Activated CD4-positive, alpha-beta memory T cell treated with anti-CD3 and anti-CD28 coated beads, Interleukin-2, amount 10 ng/mL, durations not matched to agents 7 days and 5 days (primary cell): ENCODE measurements at regions of chrX and their contacts with region 1.

Region 1: GRCh38 chrX:53683556-53684414 is 2.7 kb downstream of the HUWE1 start:
- DNase-seq: peak; percentile 93
- H3K4me3 Mint-ChIP-seq: peak overlapping the region; percentile 90
- H3K27ac Mint-ChIP-seq: peak overlapping the region; percentile 95
- H3K4me1 Mint-ChIP-seq: peaks cover 40% of the 10 kb centered on the region
- H3K27me3 Mint-ChIP-seq: no peaks in the 10 kb centered on the region

Region 2: GRCh38 chrX:53422086-53422860 is 261.5 kb before region 1 on chrX and contains the start of gene SMC1A:
- CTCF ChIA-PET with region 1: no interaction called
- POLR2A ChIA-PET with region 1: interaction called, 20 read pairs
- DNase-seq: peak; percentile 95
- H3K4me3 Mint-ChIP-seq: peak within 1 kb of the TSS; percentile 93
- H3K27ac Mint-ChIP-seq: peak within 1 kb of the TSS; percentile 93
- H3K4me1 Mint-ChIP-seq: peaks cover 34% of the 10 kb centered on the region
- H3K27me3 Mint-ChIP-seq: no peaks in the 10 kb centered on the region
- total RNA-seq, gene SMC1A: 130 to 132 TPM

Region 3: GRCh38 chrX:53587795-53588420 is 95.9 kb before region 1 on chrX:
- CTCF ChIA-PET with region 1: no interaction called
- POLR2A ChIA-PET with region 1: no interaction called
- DNase-seq: no peak
- H3K4me3 Mint-ChIP-seq: no peak overlapping the region
- H3K27ac Mint-ChIP-seq: peak overlapping the region; percentile 35
- H3K4me1 Mint-ChIP-seq: peaks cover 24% of the 10 kb centered on the region
- H3K27me3 Mint-ChIP-seq: no peaks in the 10 kb centered on the region

Region 4: DNA sequence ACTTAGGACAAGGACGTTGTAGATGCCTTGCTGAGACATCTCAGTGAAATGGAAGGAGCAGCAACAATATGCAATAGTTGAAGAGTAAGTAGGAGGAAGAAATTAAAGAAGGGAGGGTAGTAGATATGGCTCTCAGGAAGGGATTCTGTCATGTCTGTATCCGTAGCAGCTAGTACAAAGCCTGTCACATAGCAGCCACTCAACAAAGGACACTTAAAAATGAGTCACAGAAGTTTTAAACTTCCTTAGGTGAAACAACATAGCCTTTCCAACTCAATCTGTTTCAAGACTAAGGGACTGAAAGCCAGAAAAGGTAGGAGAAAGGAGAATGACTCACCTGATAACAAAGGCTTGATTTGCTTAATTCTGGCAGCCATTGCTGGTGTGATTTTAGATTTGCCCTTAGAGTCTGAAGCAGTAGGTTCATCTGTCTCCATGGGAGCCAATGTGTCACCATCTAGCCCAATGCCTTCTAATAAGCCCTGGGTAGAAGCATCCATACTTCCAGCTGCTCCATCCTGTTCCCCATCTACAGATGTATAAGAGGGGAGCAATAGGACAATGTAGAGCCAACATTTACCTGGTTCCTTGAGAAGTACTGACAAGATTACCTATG is 83.9 kb before region 1 on chrX:
- CTCF ChIA-PET with region 1: no interaction called
- POLR2A ChIA-PET with region 1: no interaction called
- DNase-seq: no peak
- H3K4me3 Mint-ChIP-seq: no peak overlapping the region
- H3K27ac Mint-ChIP-seq: no peak overlapping the region
- H3K4me1 Mint-ChIP-seq: peaks cover 10% of the 10 kb centered on the region
- H3K27me3 Mint-ChIP-seq: no peaks in the 10 kb centered on the region

Region 5: GRCh38 chrX:53694642-53695041 is 10.9 kb after region 1 on chrX:
- CTCF ChIA-PET with region 1: interaction called, 5 read pairs
- POLR2A ChIA-PET with region 1: interaction called, 18 read pairs
- DNase-seq: no peak
- H3K4me3 Mint-ChIP-seq: no peak overlapping the region
- H3K27ac Mint-ChIP-seq: no peak overlapping the region
- H3K4me1 Mint-ChIP-seq: peaks cover 26% of the 10 kb centered on the region
- H3K27me3 Mint-ChIP-seq: no peaks in the 10 kb centered on the region

Region 6: DNA sequence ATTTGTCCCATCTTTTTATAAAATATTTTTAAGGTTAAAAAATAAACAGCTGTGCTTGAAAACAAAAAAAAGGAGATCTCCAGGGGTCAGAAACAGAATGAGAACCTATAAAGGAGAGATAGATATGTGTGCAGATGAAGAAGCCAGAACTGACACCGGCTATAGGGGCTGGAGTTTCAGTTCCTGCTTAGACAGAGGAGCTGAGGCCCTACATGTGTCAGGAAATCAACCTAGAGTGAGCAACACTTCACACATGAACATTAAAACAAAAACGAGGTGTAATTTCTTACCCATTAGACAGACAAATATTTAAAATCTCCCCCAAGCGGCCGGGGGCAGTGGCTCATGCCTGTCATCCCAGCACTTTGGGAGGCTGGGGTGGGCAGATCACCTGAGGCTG is 20.5 kb after region 1 on chrX:
- CTCF ChIA-PET with region 1: interaction called, 3 read pairs
- POLR2A ChIA-PET with region 1: interaction called, 19 read pairs
- DNase-seq: no peak
- H3K4me3 Mint-ChIP-seq: no peak overlapping the region
- H3K27ac Mint-ChIP-seq: no peak overlapping the region
- H3K4me1 Mint-ChIP-seq: no peaks in the 10 kb centered on the region
- H3K27me3 Mint-ChIP-seq: no peaks in the 10 kb centered on the region

Region 7: GRCh38 chrX:53714580-53715345 is 31.0 kb after region 1 on chrX:
- CTCF ChIA-PET with region 1: interaction called, 10 read pairs
- POLR2A ChIA-PET with region 1: interaction called, 398 read pairs
- DNase-seq: peak; percentile 75
- H3K4me3 Mint-ChIP-seq: peak overlapping the region; percentile 85
- H3K27ac Mint-ChIP-seq: peak overlapping the region; percentile 100
- H3K4me1 Mint-ChIP-seq: peaks cover 60% of the 10 kb centered on the region
- H3K27me3 Mint-ChIP-seq: no peaks in the 10 kb centered on the region

Region 8: DNA sequence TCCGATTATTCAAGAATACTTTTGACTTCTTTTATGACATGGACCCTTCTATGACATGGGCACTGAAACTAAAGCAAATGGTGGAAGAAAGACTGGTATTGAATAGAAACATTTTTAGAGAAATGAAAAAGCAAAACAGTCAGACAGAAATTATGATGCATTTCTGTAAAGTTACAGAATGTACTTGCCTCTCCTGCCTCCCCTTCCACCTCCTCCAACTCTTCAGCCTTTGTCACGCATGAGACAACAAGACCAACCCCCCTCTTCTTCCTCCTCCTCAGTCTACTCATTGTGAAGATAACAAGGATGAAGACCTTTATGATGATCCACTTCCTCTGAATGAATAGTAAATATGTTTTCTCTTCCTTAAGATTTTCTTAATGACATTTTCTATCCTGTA is 49.0 kb after region 1 on chrX:
- CTCF ChIA-PET with region 1: interaction called, 3 read pairs
- POLR2A ChIA-PET with region 1: interaction called, 46 read pairs
- DNase-seq: no peak
- H3K4me3 Mint-ChIP-seq: peak overlapping the region; percentile 57
- H3K27ac Mint-ChIP-seq: peak overlapping the region; percentile 90
- H3K4me1 Mint-ChIP-seq: peaks cover 62% of the 10 kb centered on the region
- H3K27me3 Mint-ChIP-seq: no peaks in the 10 kb centered on the region

Region 9: GRCh38 chrX:53864591-53864990 is 180.8 kb after region 1 on chrX:
- CTCF ChIA-PET with region 1: no interaction called
- POLR2A ChIA-PET with region 1: no interaction called
- DNase-seq: no peak
- H3K4me3 Mint-ChIP-seq: no peak overlapping the region
- H3K27ac Mint-ChIP-seq: no peak overlapping the region
- H3K4me1 Mint-ChIP-seq: no peaks in the 10 kb centered on the region
- H3K27me3 Mint-ChIP-seq: no peaks in the 10 kb centered on the region

Region 10: DNA sequence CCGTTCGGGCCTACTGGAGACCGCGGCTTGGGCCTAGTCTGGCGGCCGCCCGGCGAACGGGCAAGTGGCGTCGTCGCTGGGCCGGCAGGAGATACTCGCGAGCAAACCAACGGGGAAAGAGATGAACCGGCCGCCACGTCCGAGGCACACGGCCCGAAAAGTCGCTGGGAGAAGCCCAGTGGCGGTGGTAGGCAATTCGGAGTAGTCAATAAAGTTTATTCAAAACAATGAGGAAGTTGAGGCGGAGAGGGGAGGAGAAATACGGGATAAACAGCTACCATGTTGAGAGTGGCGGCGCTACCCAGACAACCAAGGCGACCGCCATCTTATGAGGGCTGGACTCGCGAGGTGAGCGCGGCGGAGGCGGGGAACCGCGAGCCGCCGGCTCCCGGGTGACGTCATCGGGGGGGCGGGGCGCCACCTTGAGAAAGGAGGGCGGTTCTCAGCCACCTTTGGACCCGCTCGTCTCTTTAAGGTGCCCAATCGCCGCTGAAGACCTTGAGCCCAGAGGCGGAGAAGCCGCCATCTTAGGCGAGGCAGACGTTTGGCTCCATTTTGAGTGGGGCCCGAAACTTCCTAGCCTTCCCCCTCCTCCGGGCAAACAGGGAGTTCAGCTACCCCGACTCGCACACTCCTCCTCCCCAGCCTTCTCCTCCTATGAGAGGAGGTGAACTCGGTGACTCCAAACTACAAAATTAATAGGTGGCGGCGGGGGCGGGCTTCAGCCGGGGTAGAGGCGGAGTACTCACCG is 360.5 kb after region 1 on chrX and contains the start of gene PHF8:
- CTCF ChIA-PET with region 1: interaction called, 4 read pairs
- POLR2A ChIA-PET with region 1: interaction called, 22 read pairs
- DNase-seq: peak; percentile 95
- H3K4me3 Mint-ChIP-seq: peak within 1 kb of the TSS; percentile 96
- H3K27ac Mint-ChIP-seq: peak within 1 kb of the TSS; percentile 96
- H3K4me1 Mint-ChIP-seq: peaks cover 35% of the 10 kb centered on the region
- H3K27me3 Mint-ChIP-seq: no peaks in the 10 kb centered on the region
- total RNA-seq, gene PHF8: 40.4 to 42.5 TPM